ENCODE measurements at regions of chr10 and their contacts with region 1.

Region 1: GRCh38 chr10:117162093-117163021 is 24.3 kb upstream of the VAX1 start:
- DNase-seq: peak; percentile 52
- H3K4me3 ChIP-seq: peak overlapping the region; percentile 55
- H3K27ac ChIP-seq: peak overlapping the region; percentile 73
- H3K4me1 ChIP-seq: peaks cover 58% of the 10 kb centered on the region
- H3K27me3 ChIP-seq: no peaks in the 10 kb centered on the region
- CTCF ChIP-seq: no peak

Region 2: DNA sequence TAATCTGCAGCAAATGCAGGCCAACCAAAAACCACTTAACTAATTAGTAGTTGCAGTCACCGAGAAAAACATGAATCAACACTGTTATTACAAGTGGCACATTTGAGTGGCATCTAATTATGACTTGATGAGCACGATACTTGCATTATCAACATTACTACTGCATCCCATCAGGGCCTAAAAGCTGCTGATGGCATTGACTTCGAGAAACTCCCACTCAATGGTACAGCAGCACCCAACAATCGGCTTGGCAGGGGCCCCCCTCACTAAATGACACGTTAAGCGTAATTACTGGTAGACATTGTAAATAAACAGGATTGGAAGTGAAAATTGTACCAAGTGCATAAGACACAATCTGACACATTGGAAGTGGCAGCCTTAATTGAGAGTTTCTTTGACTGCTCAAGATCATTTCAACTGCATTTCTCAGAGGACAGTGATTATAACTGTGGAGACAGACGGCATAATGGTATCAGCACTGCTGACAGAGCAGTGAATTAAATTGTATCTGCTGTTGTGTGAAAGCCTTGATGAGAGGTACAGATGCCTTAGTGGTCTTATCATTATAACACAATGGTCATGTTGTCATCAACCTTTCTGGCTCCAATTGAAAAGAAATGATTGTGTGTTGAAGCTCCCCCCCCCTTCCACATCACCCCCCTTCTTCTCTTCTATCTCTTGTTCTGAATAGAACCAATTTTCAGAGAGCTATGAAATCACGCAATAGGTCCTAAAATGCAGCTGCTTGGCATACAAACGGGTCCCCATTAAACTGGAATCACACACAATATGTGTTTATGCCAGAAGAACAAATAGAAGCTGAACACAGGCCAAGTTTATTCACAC is 200.7 kb before region 1 on chr10:
- CTCF ChIA-PET with region 1: interaction called, 10 read pairs
- POLR2A ChIA-PET with region 1: no interaction called
- intact Hi-C with region 1: no loop called
- DNase-seq: no peak
- H3K4me3 ChIP-seq: no peak overlapping the region
- H3K27ac ChIP-seq: no peak overlapping the region
- H3K4me1 ChIP-seq: peaks cover 17% of the 10 kb centered on the region
- H3K27me3 ChIP-seq: no peaks in the 10 kb centered on the region
- CTCF ChIP-seq: no peak

Region 3: DNA sequence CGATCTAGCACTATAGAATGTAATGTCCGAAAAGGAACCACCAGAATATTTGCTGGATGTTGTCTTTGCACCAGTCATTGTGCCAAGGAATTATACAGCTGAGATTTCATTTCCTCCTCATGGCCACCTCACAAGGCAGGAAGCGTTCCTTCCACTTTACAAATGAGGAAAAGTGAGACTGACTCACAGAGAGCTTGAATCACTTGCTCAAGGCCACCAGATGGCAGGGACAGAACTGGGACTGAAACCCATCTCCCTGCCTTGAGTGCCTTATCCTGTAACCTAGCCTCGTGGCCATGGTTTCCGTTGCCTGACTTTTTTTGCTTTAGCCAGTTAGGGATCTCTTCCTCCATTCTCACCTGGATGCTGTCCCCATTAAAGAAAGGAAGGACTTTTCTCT is 257.6 kb after region 1 on chr10:
- CTCF ChIA-PET with region 1: no interaction called
- POLR2A ChIA-PET with region 1: no interaction called
- intact Hi-C with region 1: no loop called
- DNase-seq: no peak
- H3K4me3 ChIP-seq: no peak overlapping the region
- H3K27ac ChIP-seq: no peak overlapping the region
- H3K4me1 ChIP-seq: no peaks in the 10 kb centered on the region
- H3K27me3 ChIP-seq: no peaks in the 10 kb centered on the region
- CTCF ChIP-seq: no peak

Measured in A673 (cell line).